ENCODE measurements at regions of chr3 and their contacts with region 1.

Region 1: DNA sequence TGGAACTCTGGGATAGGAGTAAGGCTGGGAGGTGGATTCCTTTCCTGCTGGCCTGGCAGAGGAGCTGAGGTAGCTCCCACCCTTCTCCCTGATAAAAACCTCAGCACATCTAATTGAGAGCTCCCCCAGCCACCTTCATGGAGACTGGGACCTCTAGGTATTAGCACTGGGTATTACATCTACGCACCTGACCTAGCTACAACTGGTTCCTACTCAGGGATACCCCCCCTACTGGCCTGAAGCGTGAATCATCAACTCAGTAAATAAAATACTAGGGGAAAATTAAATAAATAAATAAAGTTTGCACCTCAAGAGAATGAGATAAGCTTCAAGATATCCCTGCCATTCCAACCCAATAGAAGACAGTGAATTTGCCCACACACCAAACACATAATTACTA is 140.4 kb downstream of the NEK10 start:
- DNase-seq: peak; percentile 45
- ATAC-seq: peak; percentile 100
- H3K4me3 ChIP-seq: no peak overlapping the region
- H3K27ac ChIP-seq: no peak overlapping the region
- H3K4me1 ChIP-seq: peaks cover 0 to 6% of the 10 kb centered on the region in 2 experiments; a peak in 2 of 4 replicates
- H3K27me3 ChIP-seq: no peaks in the 10 kb centered on the region
- CTCF ChIP-seq: peak; percentile 51 to 68 (median 63)
- POLR2A ChIP-seq: no peak
- RAD21 ChIP-seq: peak; percentile 41; the same call in 1 of the 2 replicates

Region 2: GRCh38 chr3:27253831-27254230 is 25.0 kb after region 1 on chr3:
- CTCF ChIA-PET with region 1: interaction called, 12 read pairs
- POLR2A ChIA-PET with region 1: interaction called, 3 read pairs
- RAD21 ChIA-PET with region 1: no interaction called
- intact Hi-C with region 1: no loop called
- DNase-seq: peak; percentile 51
- ATAC-seq: peak; percentile 100
- H3K4me3 ChIP-seq: no peak overlapping the region
- H3K27ac ChIP-seq: no peak overlapping the region
- H3K4me1 ChIP-seq: no peaks in the 10 kb centered on the region
- H3K27me3 ChIP-seq: no peaks in the 10 kb centered on the region
- CTCF ChIP-seq: peak; percentile 62 to 71 (median 64); a peak in 5 of 6 replicates
- POLR2A ChIP-seq: no peak
- RAD21 ChIP-seq: peak; percentile 85